Caco-2 (cell line): ENCODE measurements at regions of chr10 and their contacts with region 1.

Region 1: DNA sequence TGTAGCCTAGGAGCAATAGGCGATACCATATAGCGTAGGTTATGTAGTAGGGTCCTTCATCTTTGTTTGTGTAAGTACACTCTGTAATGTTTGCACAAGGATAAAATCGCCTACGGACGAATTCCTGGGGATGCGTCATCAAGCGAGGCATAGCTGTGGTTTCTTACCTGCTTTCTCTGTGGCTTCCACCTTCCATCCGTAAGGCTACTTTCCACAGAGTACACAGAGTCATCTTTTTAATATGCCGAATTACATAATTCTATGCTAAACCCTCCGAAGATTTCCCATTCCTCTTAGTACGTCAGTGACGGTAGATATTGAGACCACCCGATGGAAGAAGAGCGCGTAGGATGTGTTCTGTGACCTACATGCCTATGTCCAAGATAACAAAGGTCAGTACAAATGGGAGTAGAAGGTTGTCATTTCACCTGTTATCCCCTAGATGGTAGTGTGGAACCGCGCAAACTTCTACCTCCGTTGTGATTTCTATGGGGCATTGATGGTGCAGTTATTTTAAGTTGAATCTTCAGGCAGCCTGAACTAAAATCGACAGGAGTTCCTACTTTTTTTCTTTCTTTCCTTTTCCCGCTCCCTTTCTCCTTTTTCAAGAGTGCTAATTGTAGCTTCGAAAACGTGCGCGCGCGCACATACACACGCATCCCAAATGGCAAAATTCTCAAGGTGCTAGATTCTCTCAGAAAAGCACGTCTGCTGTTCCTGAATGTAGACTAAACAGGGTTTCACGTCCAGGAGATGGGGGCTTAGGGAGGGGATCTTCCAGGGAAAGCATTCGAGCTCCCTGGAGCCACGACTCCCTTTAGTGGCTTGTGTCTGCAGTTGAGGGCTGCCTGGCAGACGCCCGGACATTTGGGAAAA is 111.7 kb upstream of the MBL2 start:
- DNase-seq: peak; percentile 95 to 96
- H3K4me3 ChIP-seq: peak overlapping the region; percentile 37
- H3K4me3 Mint-ChIP-seq: peak overlapping the region; percentile 85
- H3K27ac Mint-ChIP-seq: peak overlapping the region; percentile 92
- H3K4me1 ChIP-seq: peaks cover 11% of the 10 kb centered on the region
- H3K4me1 Mint-ChIP-seq: peaks cover 35% of the 10 kb centered on the region
- H3K27me3 ChIP-seq: no peaks in the 10 kb centered on the region
- H3K27me3 Mint-ChIP-seq: no peaks in the 10 kb centered on the region
- CTCF ChIP-seq: peak; percentile 92 to 97

Region 2: DNA sequence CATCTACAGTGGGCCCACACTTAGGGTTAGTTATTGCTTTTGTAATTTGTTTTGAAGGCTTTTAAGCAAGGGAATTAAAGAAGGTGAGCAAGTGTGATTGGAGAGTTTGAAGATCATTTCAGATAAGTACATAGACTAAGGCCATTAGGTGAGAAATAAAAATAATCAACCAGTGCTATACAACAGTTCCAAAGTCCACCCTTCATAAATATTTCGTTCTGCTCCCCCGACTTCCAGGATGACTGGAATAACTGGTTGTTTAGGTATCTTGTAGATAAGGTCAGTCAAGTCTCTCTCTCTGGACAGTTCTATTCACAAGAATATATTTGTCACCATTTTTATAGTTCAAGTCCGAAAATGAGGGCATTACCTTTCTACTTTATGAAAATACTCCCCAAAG is 13.7 kb before region 1 on chr10:
- CTCF ChIA-PET with region 1: interaction called, 3 read pairs
- POLR2A ChIA-PET with region 1: no interaction called
- intact Hi-C with region 1: loop called (anchors 1 kb)
- DNase-seq: peak; percentile 51 to 55
- H3K4me3 ChIP-seq: no peak overlapping the region
- H3K4me3 Mint-ChIP-seq: no peak overlapping the region
- H3K27ac Mint-ChIP-seq: peak overlapping the region; percentile 29
- H3K4me1 ChIP-seq: peaks cover 46% of the 10 kb centered on the region
- H3K4me1 Mint-ChIP-seq: peaks cover 22% of the 10 kb centered on the region
- H3K27me3 ChIP-seq: no peaks in the 10 kb centered on the region
- H3K27me3 Mint-ChIP-seq: no peaks in the 10 kb centered on the region
- CTCF ChIP-seq: no peak

Region 3: DNA sequence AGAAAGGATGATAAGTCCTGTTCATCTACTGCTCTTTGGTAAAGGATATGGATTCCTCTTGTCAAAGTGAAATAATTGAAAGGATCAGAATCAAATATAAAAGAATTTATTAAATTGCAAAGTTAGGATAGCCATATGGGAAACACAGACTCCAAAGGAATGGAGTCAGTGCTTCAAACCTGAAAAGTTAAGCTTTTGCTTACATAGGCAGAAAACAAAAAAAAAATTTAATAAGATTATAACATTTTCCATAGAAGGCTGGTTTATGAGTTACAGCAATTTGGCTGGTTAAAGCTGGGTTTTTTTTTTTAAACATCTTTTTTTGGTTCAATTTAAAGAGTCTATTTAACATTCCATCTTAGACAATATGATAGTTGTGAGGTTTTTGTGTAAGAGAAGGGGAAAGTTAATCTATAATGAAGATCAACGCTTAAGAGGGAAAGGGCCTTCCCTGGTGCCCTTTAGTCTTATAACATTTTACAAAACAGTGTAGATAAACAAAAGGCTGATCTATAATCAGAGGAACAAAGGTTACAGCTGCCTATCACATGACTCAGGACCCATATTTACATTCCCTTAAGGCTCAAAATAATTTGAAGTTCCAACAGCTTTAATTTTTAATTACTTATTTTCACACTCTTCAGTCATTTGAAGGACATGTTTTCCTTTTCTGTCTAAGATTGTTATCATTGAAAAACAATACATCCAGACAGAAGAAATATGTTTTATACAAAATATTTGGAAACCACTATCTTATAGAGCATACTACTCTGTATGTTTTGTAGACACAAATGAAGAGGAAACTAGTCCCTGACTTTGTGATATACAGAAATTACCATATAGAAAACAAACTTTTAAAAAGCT is 122.7 kb after region 1 on chr10:
- CTCF ChIA-PET with region 1: no interaction called
- POLR2A ChIA-PET with region 1: no interaction called
- intact Hi-C with region 1: loop called (anchors 1 kb)
- DNase-seq: peak in 1 of 2 experiments; percentile 48
- H3K4me3 ChIP-seq: no peak overlapping the region
- H3K4me3 Mint-ChIP-seq: peak overlapping the region; percentile 48
- H3K27ac Mint-ChIP-seq: peak overlapping the region; percentile 71
- H3K4me1 ChIP-seq: peaks cover 68% of the 10 kb centered on the region
- H3K4me1 Mint-ChIP-seq: peaks cover 58% of the 10 kb centered on the region
- H3K27me3 ChIP-seq: no peaks in the 10 kb centered on the region
- H3K27me3 Mint-ChIP-seq: no peaks in the 10 kb centered on the region
- CTCF ChIP-seq: no peak

Region 4: DNA sequence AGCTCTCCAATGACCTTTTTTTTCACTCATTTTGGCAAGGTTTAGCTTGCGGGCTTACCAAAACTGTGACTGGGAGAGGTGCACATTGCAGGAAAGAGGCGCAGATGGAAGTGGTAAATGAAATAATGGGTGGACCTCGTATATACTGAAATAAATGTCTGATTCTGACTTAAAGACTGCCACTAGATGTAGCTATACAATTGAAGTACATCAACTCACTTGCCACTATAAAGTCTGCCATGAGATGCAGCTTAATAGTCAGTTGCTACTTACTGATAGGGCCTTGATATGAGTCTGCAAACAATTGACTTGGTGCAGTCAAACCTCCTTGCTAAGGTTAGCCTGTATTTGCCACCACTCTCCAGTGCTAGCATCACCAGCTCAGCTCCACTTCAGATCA is 414.2 kb after region 1 on chr10:
- CTCF ChIA-PET with region 1: no interaction called
- POLR2A ChIA-PET with region 1: no interaction called
- intact Hi-C with region 1: loop called (anchors 5 kb)
- DNase-seq: no peak
- H3K4me3 ChIP-seq: no peak overlapping the region
- H3K4me3 Mint-ChIP-seq: no peak overlapping the region
- H3K27ac Mint-ChIP-seq: no peak overlapping the region
- H3K4me1 ChIP-seq: no peaks in the 10 kb centered on the region
- H3K4me1 Mint-ChIP-seq: no peaks in the 10 kb centered on the region
- H3K27me3 ChIP-seq: no peaks in the 10 kb centered on the region
- H3K27me3 Mint-ChIP-seq: no peaks in the 10 kb centered on the region
- CTCF ChIP-seq: no peak

Region 5: GRCh38 chr10:53808677-53809372 is 924.6 kb after region 1 on chr10:
- CTCF ChIA-PET with region 1: interaction called, 4 read pairs
- POLR2A ChIA-PET with region 1: no interaction called
- intact Hi-C with region 1: loop called (anchors 1 kb)
- DNase-seq: peak; percentile 47 to 59
- H3K4me3 ChIP-seq: no peak overlapping the region
- H3K4me3 Mint-ChIP-seq: no peak overlapping the region
- H3K27ac Mint-ChIP-seq: no peak overlapping the region
- H3K4me1 ChIP-seq: no peaks in the 10 kb centered on the region
- H3K4me1 Mint-ChIP-seq: peaks cover 7% of the 10 kb centered on the region
- H3K27me3 ChIP-seq: no peaks in the 10 kb centered on the region; the same call in 1 of the 2 replicates
- H3K27me3 Mint-ChIP-seq: peaks cover 7% of the 10 kb centered on the region
- CTCF ChIP-seq: peak in 1 of 2 experiments; percentile 58

Region 6: GRCh38 chr10:53903756-53904155 is 1019.5 kb after region 1 on chr10:
- CTCF ChIA-PET with region 1: no interaction called
- POLR2A ChIA-PET with region 1: no interaction called
- intact Hi-C with region 1: loop called (anchors 1 kb)
- DNase-seq: no peak
- H3K4me3 ChIP-seq: no peak overlapping the region
- H3K4me3 Mint-ChIP-seq: no peak overlapping the region
- H3K27ac Mint-ChIP-seq: no peak overlapping the region
- H3K4me1 ChIP-seq: peaks cover 55% of the 10 kb centered on the region
- H3K4me1 Mint-ChIP-seq: no peaks in the 10 kb centered on the region
- H3K27me3 ChIP-seq: no peaks in the 10 kb centered on the region
- H3K27me3 Mint-ChIP-seq: no peaks in the 10 kb centered on the region
- CTCF ChIP-seq: no peak